A673 (cell line): ENCODE measurements at regions of chr6 and their contacts with region 1.

Region 1: GRCh38 chr6:159008656-159009288 is 8.8 kb upstream of the RSPH3 start:
- DNase-seq: peak; percentile 32
- H3K4me3 ChIP-seq: no peak overlapping the region
- H3K27ac ChIP-seq: no peak overlapping the region
- H3K4me1 ChIP-seq: peaks cover 11% of the 10 kb centered on the region
- H3K27me3 ChIP-seq: no peaks in the 10 kb centered on the region
- CTCF ChIP-seq: peak; percentile 52

Region 2: GRCh38 chr6:159104163-159104925 is 95.6 kb after region 1 on chr6:
- CTCF ChIA-PET with region 1: interaction called, 4 read pairs
- POLR2A ChIA-PET with region 1: no interaction called
- intact Hi-C with region 1: loop called (anchors 2 kb)
- DNase-seq: peak; percentile 59
- H3K4me3 ChIP-seq: no peak overlapping the region
- H3K27ac ChIP-seq: no peak overlapping the region
- H3K4me1 ChIP-seq: no peaks in the 10 kb centered on the region
- H3K27me3 ChIP-seq: no peaks in the 10 kb centered on the region
- CTCF ChIP-seq: peak; percentile 84

Region 3: GRCh38 chr6:159134701-159135364 is 126.1 kb after region 1 on chr6:
- CTCF ChIA-PET with region 1: interaction called, 20 read pairs
- POLR2A ChIA-PET with region 1: no interaction called
- intact Hi-C with region 1: loop called (anchors 5 kb)
- DNase-seq: peak; percentile 75
- H3K4me3 ChIP-seq: no peak overlapping the region
- H3K27ac ChIP-seq: no peak overlapping the region
- H3K4me1 ChIP-seq: no peaks in the 10 kb centered on the region
- H3K27me3 ChIP-seq: peaks cover 10% of the 10 kb centered on the region
- CTCF ChIP-seq: peak; percentile 93